ENCODE measurements at regions of chr12 and their contacts with region 1.

Region 1: DNA sequence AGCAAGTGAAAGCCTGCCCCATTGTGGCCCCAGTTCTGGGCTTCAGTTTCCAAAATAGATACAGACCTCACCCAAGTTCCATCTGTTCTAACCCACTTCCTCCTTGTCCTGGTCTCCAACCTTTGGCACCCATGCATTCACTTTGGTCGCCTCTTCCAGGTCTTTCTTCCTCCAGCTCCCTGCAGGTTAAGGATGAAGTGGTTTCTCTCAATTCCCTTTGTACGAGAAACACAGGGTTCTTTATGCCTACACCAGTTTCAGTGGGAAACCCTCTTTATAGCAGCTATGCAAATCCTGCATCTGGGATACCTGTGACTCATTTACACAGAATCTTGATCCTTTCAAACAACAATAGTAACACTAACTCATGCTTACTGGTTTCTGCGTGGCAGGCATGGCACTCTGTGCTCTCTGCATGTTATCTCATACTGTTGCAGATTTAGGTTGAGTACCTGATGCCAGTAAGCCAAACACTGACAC is 110.6 kb upstream of the AMIGO2 start:
- DNase-seq: no peak
- H3K4me3 ChIP-seq: no peak overlapping the region
- H3K27ac ChIP-seq: no peak overlapping the region
- H3K4me1 ChIP-seq: peaks cover 60% of the 10 kb centered on the region
- CTCF ChIP-seq: no peak

Region 2: DNA sequence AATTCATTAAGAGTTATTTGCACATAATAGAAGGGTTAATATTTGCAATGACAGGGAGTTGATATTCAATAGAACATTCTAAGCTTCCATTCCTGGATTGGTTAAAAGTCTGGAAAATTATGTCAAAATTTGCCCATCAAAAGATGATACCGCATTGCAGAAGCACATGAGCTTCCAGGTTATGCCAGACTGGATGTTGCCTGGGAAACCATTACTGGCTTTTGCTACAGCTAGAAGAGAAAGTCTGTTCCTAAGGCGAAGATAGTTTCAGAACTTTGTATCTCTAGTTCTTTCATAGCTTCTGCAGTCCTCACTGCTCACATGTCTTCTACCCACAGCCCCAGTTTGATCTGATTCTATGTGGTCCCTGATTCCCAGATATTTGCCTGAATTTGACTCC is 11.9 kb after region 1 on chr12:
- CTCF ChIA-PET with region 1: interaction called, 3 read pairs
- POLR2A ChIA-PET with region 1: interaction called, 33 read pairs
- intact Hi-C with region 1: no loop called
- DNase-seq: no peak
- H3K4me3 ChIP-seq: no peak overlapping the region
- H3K27ac ChIP-seq: no peak overlapping the region
- H3K4me1 ChIP-seq: peaks cover 16% of the 10 kb centered on the region
- CTCF ChIP-seq: no peak

Region 3: GRCh38 chr12:47207340-47207717 is 17.0 kb after region 1 on chr12:
- CTCF ChIA-PET with region 1: interaction called, 3 read pairs
- POLR2A ChIA-PET with region 1: interaction called, 33 read pairs
- intact Hi-C with region 1: no loop called
- DNase-seq: peak; percentile 74
- H3K4me3 ChIP-seq: peak overlapping the region; percentile 28
- H3K27ac ChIP-seq: peak overlapping the region; percentile 77
- H3K4me1 ChIP-seq: peaks cover 33% of the 10 kb centered on the region
- CTCF ChIP-seq: no peak

Region 4: GRCh38 chr12:47286676-47287075 is 96.4 kb after region 1 on chr12:
- CTCF ChIA-PET with region 1: no interaction called
- POLR2A ChIA-PET with region 1: no interaction called
- intact Hi-C with region 1: no loop called
- DNase-seq: no peak
- H3K4me3 ChIP-seq: no peak overlapping the region
- H3K27ac ChIP-seq: no peak overlapping the region
- H3K4me1 ChIP-seq: no peaks in the 10 kb centered on the region
- CTCF ChIP-seq: no peak

Measured in OCI-LY7 (cell line).